ENCODE measurements at regions of chr6 and their contacts with region 1.

Region 1: GRCh38 chr6:89371849-89372505 is 19.5 kb upstream of the UBE2J1 start:
- DNase-seq: peak; percentile 85 to 90 (median 86)
- H3K4me3 ChIP-seq: no peak overlapping the region
- H3K27ac ChIP-seq: no peak overlapping the region
- H3K4me1 ChIP-seq: peaks cover 15 to 37% (median 27%) of the 10 kb centered on the region in 4 experiments
- H3K27me3 ChIP-seq: no peaks in the 10 kb centered on the region

Region 2: DNA sequence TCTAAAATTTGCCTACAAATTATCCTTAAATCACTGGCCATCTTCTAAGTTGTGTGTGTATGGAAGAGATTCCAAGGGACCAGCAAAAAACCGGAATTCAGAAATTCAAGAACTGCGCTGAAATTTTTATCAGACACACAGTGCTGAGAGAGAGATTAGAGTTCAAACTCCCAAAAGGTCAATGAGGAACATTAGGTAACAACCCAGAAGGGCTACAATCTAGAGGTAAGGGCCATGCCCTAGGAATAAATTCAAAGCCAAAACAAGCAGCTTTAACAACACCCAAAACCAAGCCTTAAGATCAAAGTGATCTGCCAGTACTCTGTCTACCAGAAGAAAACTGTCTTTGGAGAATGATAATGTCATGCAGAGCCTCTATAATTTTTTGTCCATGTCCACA is 271.9 kb before region 1 on chr6:
- CTCF ChIA-PET with region 1: no interaction called
- POLR2A ChIA-PET with region 1: no interaction called
- DNase-seq: no peak
- H3K4me3 ChIP-seq: no peak overlapping the region
- H3K27ac ChIP-seq: no peak overlapping the region
- H3K4me1 ChIP-seq: no peaks in the 10 kb centered on the region
- H3K27me3 ChIP-seq: no peaks in the 10 kb centered on the region

Region 3: GRCh38 chr6:89360415-89360999 is 11.5 kb before region 1 on chr6:
- CTCF ChIA-PET with region 1: interaction called, 102 read pairs
- POLR2A ChIA-PET with region 1: no interaction called
- DNase-seq: peak in 2 of 3 donors; percentile 44 to 45
- H3K4me3 ChIP-seq: peak overlapping the region in 1 of 7 experiments; percentile 2
- H3K27ac ChIP-seq: no peak overlapping the region
- H3K4me1 ChIP-seq: peaks cover 23 to 60% (median 42%) of the 10 kb centered on the region in 4 experiments
- H3K27me3 ChIP-seq: no peaks in the 10 kb centered on the region

Region 4: GRCh38 chr6:89412071-89413005 is 40.4 kb after region 1 on chr6 and contains the start of gene RRAGD:
- CTCF ChIA-PET with region 1: interaction called, 21 read pairs
- POLR2A ChIA-PET with region 1: interaction called, 3 read pairs
- DNase-seq: peak; percentile 73 to 92 (median 85)
- H3K4me3 ChIP-seq: peak within 1 kb of the TSS; percentile 44 to 88 (median 82)
- H3K27ac ChIP-seq: peak within 1 kb of the TSS in 1 of 2 experiments; percentile 54
- H3K4me1 ChIP-seq: peaks cover 4 to 52% (median 26%) of the 10 kb centered on the region in 4 experiments
- H3K27me3 ChIP-seq: no peaks in the 10 kb centered on the region

Region 5: GRCh38 chr6:89597988-89598692 is 226.2 kb after region 1 on chr6:
- CTCF ChIA-PET with region 1: interaction called, 15 read pairs
- POLR2A ChIA-PET with region 1: no interaction called
- DNase-seq: peak; percentile 63 to 80 (median 80)
- H3K4me3 ChIP-seq: no peak overlapping the region
- H3K27ac ChIP-seq: no peak overlapping the region
- H3K4me1 ChIP-seq: peaks cover 0 to 7% (median 2%) of the 10 kb centered on the region in 4 experiments
- H3K27me3 ChIP-seq: no peaks in the 10 kb centered on the region

Measured in common myeloid progenitor, CD34-positive (primary cell).